ENCODE measurements at regions of chr6 and their contacts with region 1.

Region 1: DNA sequence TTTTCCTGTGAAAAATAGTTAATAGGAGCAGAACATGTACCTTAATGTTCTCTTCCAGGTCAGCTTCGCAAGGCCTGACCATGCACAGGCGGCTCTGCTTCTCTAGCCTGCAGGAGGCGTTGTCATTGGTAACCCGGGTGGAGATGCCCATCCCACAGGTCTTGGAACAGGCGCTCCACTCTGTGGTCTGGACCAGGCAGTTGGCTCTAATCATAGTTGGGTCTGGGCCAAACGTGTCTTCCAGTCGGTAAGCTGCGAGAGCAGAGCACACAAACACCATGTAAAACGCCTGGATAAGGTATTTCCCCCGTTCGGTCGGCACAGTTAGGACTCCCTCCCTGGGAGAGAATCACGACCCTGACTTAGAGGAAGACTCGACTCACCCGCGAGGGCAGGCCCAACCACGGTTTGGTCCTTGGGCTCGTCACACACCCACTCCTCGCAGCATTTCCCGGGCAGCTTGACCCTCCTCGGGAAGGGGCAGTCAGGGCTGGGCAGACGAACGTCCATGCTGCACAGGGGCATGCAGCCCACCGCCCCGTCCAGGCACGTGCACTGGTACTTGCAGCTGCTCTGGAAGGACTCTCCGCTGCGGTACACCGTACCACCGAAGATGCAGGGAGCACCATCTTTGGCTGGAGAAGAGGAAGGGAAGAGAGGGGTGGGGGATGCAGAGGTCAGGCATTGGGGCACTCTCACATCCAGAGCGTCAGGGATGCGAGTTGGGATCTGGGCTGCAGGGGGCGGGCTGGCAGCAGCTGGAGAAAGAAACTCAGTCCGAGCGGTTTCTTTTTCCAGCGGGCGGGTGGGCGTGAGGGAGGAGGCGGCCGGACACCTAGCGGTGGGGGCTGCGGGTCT is 1.0 kb downstream of the CCN2 start:
- DNase-seq: peak; percentile 72
- H3K4me3 ChIP-seq: peak overlapping the region; percentile 51 to 52
- H3K27ac ChIP-seq: peak overlapping the region; percentile 77 to 81
- H3K4me1 ChIP-seq: no peaks in the 10 kb centered on the region
- H3K27me3 ChIP-seq: no peaks in the 10 kb centered on the region
- CTCF ChIP-seq: peak in 3 of 4 experiments; percentile 21 to 51 (median 47)
- POLR2A ChIP-seq: no peak

Region 2: DNA sequence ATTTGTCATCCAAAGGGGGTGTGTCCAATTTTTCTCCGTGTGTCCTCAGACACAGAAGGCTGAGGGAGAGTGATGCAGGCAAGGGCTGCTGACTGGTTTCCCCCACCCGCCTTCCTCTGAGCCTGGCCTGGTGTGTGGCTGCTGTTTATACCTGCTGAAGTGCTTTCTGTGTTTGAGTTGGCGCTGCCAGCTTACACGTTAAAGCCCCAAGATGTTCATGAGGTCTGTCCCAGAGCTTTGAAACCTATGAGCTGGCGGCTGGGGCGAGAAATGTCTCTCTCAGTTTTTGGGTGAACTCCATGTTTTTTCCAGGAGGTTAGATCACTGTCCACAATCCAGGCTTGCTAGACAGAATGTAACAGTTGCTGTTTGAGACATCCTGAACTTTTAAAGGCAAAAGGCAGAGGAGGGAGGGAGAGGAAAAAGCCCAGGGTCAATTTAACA is 70.0 kb after region 1 on chr6:
- intact Hi-C with region 1: loop called (anchors 5 kb)
- DNase-seq: peak; percentile 19
- H3K4me3 ChIP-seq: no peak overlapping the region
- H3K27ac ChIP-seq: peak overlapping the region; percentile 25 to 58
- H3K4me1 ChIP-seq: no peaks in the 10 kb centered on the region
- H3K27me3 ChIP-seq: no peaks in the 10 kb centered on the region
- CTCF ChIP-seq: no peak
- POLR2A ChIP-seq: no peak

Region 3: GRCh38 chr6:132084833-132085509 is 134.8 kb after region 1 on chr6:
- intact Hi-C with region 1: loop called (anchors 5 kb)
- DNase-seq: no peak
- H3K4me3 ChIP-seq: no peak overlapping the region
- H3K27ac ChIP-seq: peak overlapping the region; percentile 24
- H3K4me1 ChIP-seq: no peaks in the 10 kb centered on the region
- H3K27me3 ChIP-seq: no peaks in the 10 kb centered on the region
- CTCF ChIP-seq: no peak
- POLR2A ChIP-seq: no peak

Region 4: DNA sequence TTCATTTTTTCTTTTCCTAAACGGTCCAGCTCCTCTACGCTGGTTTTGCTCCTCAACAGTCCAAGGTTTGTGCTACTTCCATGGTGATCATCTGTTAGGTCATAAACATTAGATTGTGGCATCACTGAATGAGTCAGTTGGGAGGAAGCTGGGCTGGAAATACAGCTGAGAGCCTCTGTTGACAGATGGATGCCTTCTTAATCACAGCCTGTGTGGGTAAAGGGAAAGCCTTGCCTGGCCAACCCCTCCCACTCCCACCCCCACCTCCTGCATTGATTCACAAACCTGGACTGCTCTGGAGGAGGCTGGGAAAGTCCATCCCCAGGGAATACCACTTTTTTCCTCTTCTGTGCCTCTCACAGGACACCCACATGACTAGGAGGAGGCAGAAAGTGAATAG is 181.6 kb after region 1 on chr6:
- intact Hi-C with region 1: loop called (anchors 10 kb)
- DNase-seq: no peak
- H3K4me3 ChIP-seq: no peak overlapping the region
- H3K27ac ChIP-seq: peak overlapping the region; percentile 65 to 72
- H3K4me1 ChIP-seq: no peaks in the 10 kb centered on the region
- H3K27me3 ChIP-seq: no peaks in the 10 kb centered on the region
- CTCF ChIP-seq: no peak
- POLR2A ChIP-seq: no peak

Region 5: GRCh38 chr6:132161283-132161682 is 211.1 kb after region 1 on chr6:
- intact Hi-C with region 1: loop called (anchors 5 kb)
- DNase-seq: no peak
- H3K4me3 ChIP-seq: no peak overlapping the region
- H3K27ac ChIP-seq: no peak overlapping the region
- H3K4me1 ChIP-seq: no peaks in the 10 kb centered on the region
- H3K27me3 ChIP-seq: no peaks in the 10 kb centered on the region
- CTCF ChIP-seq: peak in 3 of 4 experiments; percentile 33 to 46 (median 35)
- POLR2A ChIP-seq: no peak

Measured in prostate gland (tissue), 2 donors.